Activated CD8-positive, alpha-beta T cell treated with anti-CD3 and anti-CD28 coated beads for 36 hours (primary cell): ENCODE measurements at regions of chr6 and their contacts with region 1.

Region 1: GRCh38 chr6:166313255-166314070 is 5.3 kb upstream of the PRR18 start:
- DNase-seq: peak; percentile 76
- ATAC-seq: peak; percentile 96
- H3K4me3 Mint-ChIP-seq: no peak overlapping the region
- H3K27ac Mint-ChIP-seq: no peak overlapping the region
- H3K4me1 Mint-ChIP-seq: no peaks in the 10 kb centered on the region
- H3K27me3 Mint-ChIP-seq: peaks cover 14% of the 10 kb centered on the region
- CTCF ChIP-seq: peak; percentile 76

Region 2: GRCh38 chr6:166275714-166276166 is 37.7 kb before region 1 on chr6:
- CTCF ChIA-PET with region 1: interaction called, 12 read pairs
- POLR2A ChIA-PET with region 1: no interaction called
- intact Hi-C with region 1: no loop called
- DNase-seq: peak; percentile 78
- ATAC-seq: peak; percentile 97
- H3K4me3 Mint-ChIP-seq: no peak overlapping the region
- H3K27ac Mint-ChIP-seq: no peak overlapping the region
- H3K4me1 Mint-ChIP-seq: peaks cover 6% of the 10 kb centered on the region
- H3K27me3 Mint-ChIP-seq: peaks cover 1% of the 10 kb centered on the region
- CTCF ChIP-seq: peak; percentile 99

Region 3: DNA sequence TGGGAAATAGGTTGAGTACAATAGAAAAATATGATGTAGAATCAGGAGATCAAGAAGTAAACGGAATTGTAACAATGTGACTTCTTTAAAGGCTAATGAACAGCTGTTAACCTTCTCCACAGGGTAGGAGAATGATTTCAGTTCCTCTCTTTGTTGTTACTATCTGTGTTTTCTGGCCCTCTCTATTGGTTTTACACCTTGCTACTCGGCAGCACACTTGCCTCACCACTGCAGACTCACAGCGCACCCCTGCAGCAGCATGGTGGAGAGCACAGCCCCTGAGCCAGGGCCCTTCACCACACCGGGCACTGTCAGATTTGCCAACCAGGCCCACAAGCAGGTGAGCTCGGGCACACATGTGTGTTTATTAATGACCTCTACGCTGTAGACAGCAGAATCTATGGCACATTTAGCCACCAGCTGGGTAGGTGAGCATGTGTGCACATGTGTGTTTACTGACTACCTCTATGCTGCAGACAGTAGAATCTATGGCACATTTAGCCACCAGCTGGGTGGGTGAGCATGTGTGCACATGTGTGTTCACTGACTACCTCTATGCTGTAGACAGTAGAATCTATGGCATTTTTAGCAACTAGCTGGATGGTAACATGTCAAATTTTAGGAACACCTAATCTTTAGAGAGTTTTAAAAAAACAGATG is 12.1 kb after region 1 on chr6:
- CTCF ChIA-PET with region 1: interaction called, 16 read pairs
- POLR2A ChIA-PET with region 1: interaction called, 3 read pairs
- intact Hi-C with region 1: no loop called
- DNase-seq: no peak
- ATAC-seq: no peak
- H3K4me3 Mint-ChIP-seq: no peak overlapping the region
- H3K27ac Mint-ChIP-seq: no peak overlapping the region
- H3K4me1 Mint-ChIP-seq: peaks cover under 1% of the 10 kb centered on the region
- H3K27me3 Mint-ChIP-seq: no peaks in the 10 kb centered on the region
- CTCF ChIP-seq: no peak